ENCODE measurements at regions of chr1 and their contacts with region 1.

Region 1: GRCh38 chr1:201229771-201230635 is 39.4 kb downstream of the IGFN1 start:
- DNase-seq: no peak
- ATAC-seq: no peak
- H3K4me3 ChIP-seq: no peak overlapping the region
- H3K27ac ChIP-seq: no peak overlapping the region
- H3K4me1 ChIP-seq: no peaks in the 10 kb centered on the region
- H3K27me3 ChIP-seq: no peaks in the 10 kb centered on the region
- CTCF ChIP-seq: no peak
- POLR2A ChIP-seq: no peak

Region 2: GRCh38 chr1:201085916-201086735 is 143.9 kb before region 1 on chr1:
- intact Hi-C with region 1: loop called in 1 of 2 experiments (anchors 10 kb)
- DNase-seq: peak; percentile 65 to 71 (median 67)
- ATAC-seq: peak; percentile 87 to 95 (median 88)
- H3K4me3 ChIP-seq: no peak overlapping the region
- H3K27ac ChIP-seq: no peak overlapping the region
- H3K4me1 ChIP-seq: no peaks in the 10 kb centered on the region
- H3K27me3 ChIP-seq: no peaks in the 10 kb centered on the region
- CTCF ChIP-seq: peak; percentile 53 to 75 (median 65)
- POLR2A ChIP-seq: no peak

Region 3: GRCh38 chr1:201096977-201097856 is 132.8 kb before region 1 on chr1:
- intact Hi-C with region 1: no loop called
- DNase-seq: no peak
- ATAC-seq: no peak
- H3K4me3 ChIP-seq: no peak overlapping the region
- H3K27ac ChIP-seq: no peak overlapping the region
- H3K4me1 ChIP-seq: no peaks in the 10 kb centered on the region
- H3K27me3 ChIP-seq: no peaks in the 10 kb centered on the region
- CTCF ChIP-seq: no peak
- POLR2A ChIP-seq: no peak

Measured in right lobe of liver (tissue), 6 donors.